ENCODE measurements at regions of chr1 and their contacts with region 1.

Region 1: GRCh38 chr1:42766741-42767509 is at the starts of genes C1orf50 and P3H1:
- DNase-seq: peak; percentile 100
- H3K4me3 ChIP-seq: peak within 1 kb of the TSS; percentile 91 to 98 (median 94)
- H3K27ac ChIP-seq: peak within 1 kb of the TSS; percentile 90 to 95 (median 94)
- H3K4me1 ChIP-seq: peaks cover 0 to 45% (median 40%) of the 10 kb centered on the region in 4 donors
- H3K27me3 ChIP-seq: no peaks in the 10 kb centered on the region
- CTCF ChIP-seq: no peak
- EP300 ChIP-seq: no peak
- POLR2A ChIP-seq: peak; percentile 94 to 97
- total RNA-seq, gene C1orf50: 2.2 to 6.9 (median 4.2) TPM
- total RNA-seq, gene P3H1: 15.3 to 23.3 (median 19.1) TPM

Region 2: DNA sequence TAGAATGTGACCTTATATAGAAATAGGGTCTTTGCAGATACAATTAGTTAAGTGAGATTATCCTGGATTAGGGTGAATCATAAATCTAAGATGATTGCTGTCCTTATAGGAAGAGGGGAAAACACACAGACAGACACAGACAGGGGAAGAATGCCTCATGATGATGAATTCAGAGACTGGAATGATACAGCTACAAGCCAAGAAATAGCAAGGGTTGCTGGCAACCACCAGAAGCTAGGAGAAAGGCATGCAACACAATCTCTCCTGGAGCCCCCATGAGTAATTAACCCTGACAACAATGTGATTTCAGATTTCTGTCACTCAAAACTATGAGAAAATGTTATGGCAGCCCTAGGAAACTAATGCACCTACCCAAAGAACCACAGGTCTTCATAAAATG is 127.8 kb before region 1 on chr1:
- intact Hi-C with region 1: no loop called
- DNase-seq: no peak
- H3K4me3 ChIP-seq: no peak overlapping the region
- H3K27ac ChIP-seq: no peak overlapping the region
- H3K4me1 ChIP-seq: no peaks in the 10 kb centered on the region
- H3K27me3 ChIP-seq: no peaks in the 10 kb centered on the region
- CTCF ChIP-seq: no peak
- EP300 ChIP-seq: no peak
- POLR2A ChIP-seq: no peak

Region 3: GRCh38 chr1:42657971-42658879 is 108.7 kb before region 1 on chr1 and contains the start of gene PPIH:
- intact Hi-C with region 1: loop called (anchors 5 kb)
- DNase-seq: peak; percentile 96
- H3K4me3 ChIP-seq: peak within 1 kb of the TSS; percentile 63 to 91 (median 74)
- H3K27ac ChIP-seq: peak within 1 kb of the TSS; percentile 69 to 84 (median 82)
- H3K4me1 ChIP-seq: peaks cover 0 to 20% (median 16%) of the 10 kb centered on the region in 4 donors
- H3K27me3 ChIP-seq: no peaks in the 10 kb centered on the region
- CTCF ChIP-seq: peak; percentile 9 to 55 (median 36)
- EP300 ChIP-seq: peak in 1 of 4 donors; percentile 48
- POLR2A ChIP-seq: peak in 1 of 2 donors; percentile 46
- total RNA-seq, gene PPIH: 19.7 to 32.9 (median 27.5) TPM

Region 4: GRCh38 chr1:42816585-42817434 is 49.9 kb after region 1 on chr1 and contains the starts of genes ERMAP and SVBP:
- intact Hi-C with region 1: loop called (anchors 1 kb)
- DNase-seq: peak; percentile 95
- H3K4me3 ChIP-seq: peak within 1 kb of the TSS; percentile 66 to 82 (median 77)
- H3K27ac ChIP-seq: peak within 1 kb of the TSS; percentile 96 to 98 (median 98)
- H3K4me1 ChIP-seq: peaks cover 0 to 21% (median 14%) of the 10 kb centered on the region in 4 donors
- H3K27me3 ChIP-seq: no peaks in the 10 kb centered on the region
- CTCF ChIP-seq: no peak
- EP300 ChIP-seq: no peak
- POLR2A ChIP-seq: no peak
- total RNA-seq, gene ERMAP: 7.9 to 18.6 (median 11.9) TPM
- total RNA-seq, gene SVBP: 34.6 to 48.1 (median 40.6) TPM

Region 5: DNA sequence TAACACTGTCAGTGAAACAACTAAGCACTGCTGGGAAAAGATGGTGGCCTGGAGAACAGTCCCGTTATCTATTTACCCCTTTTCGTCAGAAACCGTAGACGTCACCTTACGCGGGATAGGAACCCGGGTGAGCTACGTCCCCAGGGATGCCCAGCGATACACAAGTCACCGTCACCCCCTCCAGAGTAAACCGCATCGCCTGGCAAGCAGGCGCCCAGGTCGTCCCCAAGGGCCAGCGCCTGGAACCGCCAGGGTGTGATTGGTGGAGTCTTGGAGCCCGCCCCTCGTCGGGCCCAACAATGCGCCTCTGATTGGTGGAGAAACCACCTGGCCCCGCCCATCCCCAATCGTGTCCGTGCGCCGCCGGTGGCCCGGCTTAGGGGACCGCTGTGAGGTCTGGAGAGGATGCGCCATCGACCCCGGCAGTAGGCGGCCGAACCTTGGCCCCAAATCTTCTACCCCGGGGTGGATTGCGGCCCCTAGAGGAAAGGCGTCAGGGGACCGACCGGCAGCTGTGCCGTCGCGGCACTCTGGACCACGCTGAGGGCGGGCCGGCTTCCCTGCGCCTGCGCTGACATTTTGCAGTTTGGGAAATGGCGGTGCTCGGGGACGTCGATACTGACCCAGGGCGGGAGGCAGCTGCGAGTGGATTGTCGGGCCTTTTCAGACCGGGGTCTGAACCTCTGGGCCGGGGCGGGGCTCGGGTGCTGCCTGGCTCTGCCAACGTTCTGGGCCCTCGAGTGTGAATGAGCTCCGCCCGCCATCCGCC is 157.3 kb after region 1 on chr1:
- intact Hi-C with region 1: loop called (anchors 5 kb)
- DNase-seq: peak; percentile 97
- H3K4me3 ChIP-seq: peak overlapping the region; percentile 58 to 94 (median 71)
- H3K27ac ChIP-seq: peak overlapping the region; percentile 88 to 97 (median 94)
- H3K4me1 ChIP-seq: peaks cover 0 to 14% (median 9%) of the 10 kb centered on the region in 4 donors
- H3K27me3 ChIP-seq: no peaks in the 10 kb centered on the region
- CTCF ChIP-seq: no peak
- EP300 ChIP-seq: no peak
- POLR2A ChIP-seq: peak; percentile 73 to 86

Region 6: DNA sequence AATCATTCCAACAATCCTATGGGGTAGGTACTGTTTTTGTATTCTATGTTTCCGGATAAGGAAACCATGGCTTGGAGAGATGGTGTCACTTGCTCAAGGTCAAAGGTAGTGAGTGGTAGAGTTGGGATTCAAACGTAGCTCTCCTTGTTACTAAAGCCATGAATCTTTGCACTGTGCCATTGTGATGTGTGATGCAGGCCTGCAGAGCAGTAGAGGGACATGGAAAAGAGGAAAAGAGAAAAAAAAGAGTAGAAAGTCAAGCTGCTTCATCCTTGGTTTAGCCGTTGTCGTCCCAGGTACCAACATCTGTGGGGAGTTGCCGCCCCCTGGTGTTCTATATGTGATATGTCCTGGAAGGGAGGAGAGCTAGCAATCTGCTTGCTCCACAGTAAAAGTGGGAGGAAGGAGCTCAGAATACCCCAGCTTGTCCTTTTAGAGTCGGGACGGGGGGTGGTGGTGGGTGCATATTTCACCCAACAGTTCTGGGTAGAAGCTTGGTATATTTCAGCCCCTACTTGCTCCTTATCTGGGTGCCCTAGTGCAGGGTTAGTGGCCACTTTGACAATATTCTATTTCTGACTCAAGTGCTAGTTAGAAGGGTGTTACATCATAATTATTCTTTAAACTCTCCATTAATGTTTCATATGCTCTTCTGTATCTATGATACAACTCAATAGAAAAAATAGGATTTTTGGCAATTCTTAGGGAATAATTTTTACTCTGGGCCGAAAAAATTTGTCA is 306.7 kb after region 1 on chr1:
- intact Hi-C with region 1: loop called (anchors 5 kb)
- DNase-seq: peak; percentile 86
- H3K4me3 ChIP-seq: no peak overlapping the region
- H3K27ac ChIP-seq: no peak overlapping the region
- H3K4me1 ChIP-seq: peaks cover 0 to 15% (median 11%) of the 10 kb centered on the region in 4 donors
- H3K27me3 ChIP-seq: no peaks in the 10 kb centered on the region
- CTCF ChIP-seq: peak; percentile 80 to 89 (median 85)
- EP300 ChIP-seq: no peak
- POLR2A ChIP-seq: no peak

Measured in sigmoid colon (tissue), 7 donors.